Astrocyte of the cerebellum (primary cell): ENCODE measurements at regions of chr3 and their contacts with region 1.

Region 1: GRCh38 chr3:58623961-58624360 is 42.6 kb downstream of the FAM3D start:
- DNase-seq: no peak
- H3K4me3 ChIP-seq: no peak overlapping the region
- CTCF ChIP-seq: no peak

Region 2: DNA sequence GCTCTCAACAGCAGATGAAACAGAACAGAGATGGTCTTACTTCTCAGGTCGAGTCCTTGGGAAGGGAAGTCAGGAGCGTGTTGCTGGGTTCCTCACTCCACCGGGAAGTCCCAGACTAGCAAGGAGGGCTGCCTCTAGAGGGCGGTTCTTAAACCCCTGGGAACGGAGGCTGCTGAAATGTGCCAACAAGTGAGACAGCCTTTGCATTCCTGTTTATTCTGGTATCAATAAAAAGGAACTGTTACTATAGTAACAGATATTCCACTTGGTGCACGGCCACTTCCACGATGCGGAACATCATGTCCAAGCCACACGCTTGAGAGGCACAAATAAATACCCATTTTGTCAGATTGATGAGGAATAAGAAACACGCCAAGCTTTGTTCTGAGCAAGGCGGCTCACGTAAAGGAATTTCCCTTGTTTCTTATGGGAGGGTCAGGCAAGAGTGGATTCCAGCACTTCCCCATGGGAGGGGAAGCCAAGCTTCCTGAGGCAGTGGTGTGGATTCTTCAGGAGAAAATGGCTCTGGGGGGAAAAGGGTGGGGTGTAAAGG is 46.6 kb before region 1 on chr3 and contains the start of gene FAM107A:
- in situ Hi-C with region 1: loop called (anchors 5 kb)
- DNase-seq: peak; percentile 74
- H3K4me3 ChIP-seq: peak within 1 kb of the TSS; percentile 33
- CTCF ChIP-seq: peak; percentile 56